ENCODE measurements at regions of chr12 and their contacts with region 1.

Region 1: DNA sequence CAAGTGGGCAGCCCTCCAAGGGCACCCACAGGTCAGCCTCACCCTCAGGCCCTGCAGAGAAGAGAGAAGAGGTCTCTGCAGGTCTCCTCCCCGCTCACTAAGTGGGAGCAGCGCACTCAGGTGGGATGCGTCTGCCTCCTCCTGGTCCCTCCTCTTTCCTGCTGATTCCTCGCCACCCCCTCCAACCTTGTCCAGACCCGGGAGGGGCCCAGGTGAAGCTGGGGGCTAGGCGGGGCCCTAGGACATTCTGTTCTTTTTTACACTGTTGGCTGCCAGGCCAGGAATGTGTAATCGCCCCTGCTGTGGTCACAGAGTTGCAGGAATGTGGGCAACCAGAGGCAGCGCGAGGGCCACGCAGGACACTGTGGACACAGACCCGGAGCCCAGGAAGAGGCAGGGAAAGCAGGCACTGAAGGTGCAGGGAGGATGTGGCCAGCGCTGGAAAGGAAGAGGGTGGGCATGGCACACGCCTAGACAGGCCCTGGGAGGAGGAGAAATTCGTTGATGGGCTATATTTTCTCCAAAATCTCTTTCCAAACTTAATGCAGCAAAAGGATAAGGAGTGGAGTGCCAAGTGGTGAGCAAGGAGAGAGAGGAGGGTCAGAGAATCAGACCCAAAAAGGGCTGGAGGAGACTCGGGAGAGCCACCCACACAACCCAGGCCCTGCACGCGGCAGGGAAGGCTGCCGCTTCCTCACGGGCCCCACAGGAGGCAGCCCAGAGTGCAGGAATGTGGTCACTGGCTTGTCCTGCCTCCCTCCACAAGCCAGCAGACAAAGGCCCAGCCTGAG is 911 bp upstream of the SCNN1A start:
- DNase-seq: no peak
- H3K4me3 Mint-ChIP-seq: no peak overlapping the region
- H3K27ac Mint-ChIP-seq: peak overlapping the region; percentile 24
- H3K4me1 Mint-ChIP-seq: peaks cover 21% of the 10 kb centered on the region
- H3K27me3 Mint-ChIP-seq: peaks cover 4% of the 10 kb centered on the region

Region 2: DNA sequence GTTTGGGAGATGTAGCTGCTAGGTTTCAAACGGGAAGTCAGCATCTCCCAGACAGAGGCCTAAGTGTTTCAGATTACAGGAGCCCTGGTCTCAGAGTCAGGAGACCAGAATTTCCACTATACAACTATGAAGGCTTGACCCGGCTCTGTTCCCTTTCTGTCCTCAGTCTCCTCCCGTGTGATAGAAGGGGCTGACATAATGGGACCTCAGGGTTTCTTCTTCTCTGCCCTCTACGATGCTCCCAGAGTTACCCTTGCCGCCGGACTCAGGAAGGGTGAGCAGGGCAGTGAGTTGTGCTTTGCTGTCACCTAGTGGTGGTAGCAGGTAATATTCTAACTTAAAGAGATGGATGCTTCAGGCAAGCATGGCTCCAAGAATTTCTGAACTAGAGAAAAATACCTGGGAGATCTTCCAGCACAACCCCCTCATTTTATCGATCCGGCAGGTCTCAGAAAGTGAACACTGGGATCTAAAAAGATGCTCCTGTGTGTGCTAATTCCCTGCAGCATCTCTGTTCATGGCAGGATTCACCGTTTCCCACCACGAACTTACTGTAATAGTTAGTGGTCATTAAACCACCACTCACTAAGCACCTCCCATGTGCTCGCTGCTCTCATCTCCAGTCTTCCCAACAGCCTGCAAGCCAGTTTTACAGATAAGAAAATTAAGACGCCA is 336.2 kb before region 1 on chr12:
- intact Hi-C with region 1: no loop called
- DNase-seq: peak; percentile 26
- H3K4me3 Mint-ChIP-seq: no peak overlapping the region
- H3K27ac Mint-ChIP-seq: no peak overlapping the region
- H3K4me1 Mint-ChIP-seq: peaks cover 7% of the 10 kb centered on the region
- H3K27me3 Mint-ChIP-seq: peaks cover 2% of the 10 kb centered on the region

Region 3: GRCh38 chr12:6416596-6416995 is 40.3 kb after region 1 on chr12:
- intact Hi-C with region 1: loop called (anchors 5 kb)
- DNase-seq: no peak
- H3K4me3 Mint-ChIP-seq: no peak overlapping the region
- H3K27ac Mint-ChIP-seq: no peak overlapping the region
- H3K4me1 Mint-ChIP-seq: peaks cover 9% of the 10 kb centered on the region
- H3K27me3 Mint-ChIP-seq: peaks cover 1% of the 10 kb centered on the region

Measured in activated T-helper 1 cell treated with anti-CD3 and anti-CD28 coated beads, Interleukin-12 subunit alpha, Interleukin-12 subunit beta, Interleukin-2, Interleukin-4 antibody, amounts not matched to agents 30 ng/mL and 10 ng/mL and 1 ng/mL, durations not matched to agents 14 hours and 24 hours and 36 hours (primary cell).